Activated naive CD4-positive, alpha-beta T cell treated with anti-CD3 and anti-CD28 coated beads for 36 hours (primary cell): ENCODE measurements at regions of chr1 and their contacts with region 1.

Region 1: GRCh38 chr1:66350001-66350547 is 183.9 kb upstream of the SGIP1 start:
- DNase-seq: peak; percentile 80
- H3K4me3 Mint-ChIP-seq: peak overlapping the region; percentile 33
- H3K27ac Mint-ChIP-seq: peak overlapping the region; percentile 90
- H3K4me1 Mint-ChIP-seq: peaks cover 92% of the 10 kb centered on the region
- H3K27me3 Mint-ChIP-seq: no peaks in the 10 kb centered on the region

Region 2: DNA sequence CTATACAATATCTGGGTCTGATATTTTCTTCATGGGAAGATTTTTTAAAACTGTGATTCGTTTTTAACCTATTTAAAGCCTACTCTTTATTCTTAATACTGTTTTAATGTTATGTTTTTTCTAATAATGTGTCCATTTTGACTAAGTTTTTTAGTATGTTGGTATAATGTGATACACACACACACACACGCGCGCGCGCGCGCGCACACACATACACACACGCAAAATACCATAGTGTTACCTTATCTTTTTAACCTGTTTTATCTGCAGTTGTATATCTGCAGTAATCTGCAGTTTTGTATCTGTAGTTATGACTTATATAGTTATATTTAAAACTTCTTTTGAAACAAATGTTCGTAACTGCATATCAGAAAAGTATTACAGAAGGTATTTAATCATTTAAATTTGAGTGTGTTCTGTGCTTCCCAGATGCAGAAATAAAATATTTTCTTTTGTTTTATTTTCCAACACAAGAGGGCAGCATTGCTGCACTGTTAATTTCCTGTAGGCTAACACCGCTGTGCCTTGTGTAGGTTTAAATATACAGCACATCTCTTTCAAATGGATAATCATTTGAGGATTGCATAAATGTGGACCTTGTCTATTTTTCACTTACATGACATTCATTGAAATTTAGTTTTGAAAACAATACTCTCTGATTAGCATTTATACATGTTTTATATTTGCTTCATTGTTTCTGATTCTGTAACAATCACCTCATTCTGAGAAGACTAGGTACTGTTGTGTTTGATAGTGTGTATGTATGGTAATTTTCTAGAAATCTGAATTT is 391.3 kb before region 1 on chr1:
- CTCF ChIA-PET with region 1: interaction called, 4 read pairs
- intact Hi-C with region 1: loop called (anchors 5 kb)
- DNase-seq: peak; percentile 27
- H3K4me3 Mint-ChIP-seq: no peak overlapping the region
- H3K27ac Mint-ChIP-seq: no peak overlapping the region
- H3K4me1 Mint-ChIP-seq: no peaks in the 10 kb centered on the region
- H3K27me3 Mint-ChIP-seq: no peaks in the 10 kb centered on the region

Region 3: GRCh38 chr1:66258404-66259105 is 91.5 kb before region 1 on chr1:
- CTCF ChIA-PET with region 1: interaction called, 13 read pairs
- intact Hi-C with region 1: loop called (anchors 1 kb)
- DNase-seq: peak; percentile 43
- H3K4me3 Mint-ChIP-seq: no peak overlapping the region
- H3K27ac Mint-ChIP-seq: peak overlapping the region; percentile 3
- H3K4me1 Mint-ChIP-seq: peaks cover 84% of the 10 kb centered on the region
- H3K27me3 Mint-ChIP-seq: no peaks in the 10 kb centered on the region

Region 4: GRCh38 chr1:66339944-66340343 is 10.1 kb before region 1 on chr1:
- CTCF ChIA-PET with region 1: interaction called, 50 read pairs
- intact Hi-C with region 1: loop called (anchors 1 kb)
- DNase-seq: no peak
- H3K4me3 Mint-ChIP-seq: peak overlapping the region; percentile 65
- H3K27ac Mint-ChIP-seq: peak overlapping the region; percentile 82
- H3K4me1 Mint-ChIP-seq: peaks cover 67% of the 10 kb centered on the region
- H3K27me3 Mint-ChIP-seq: no peaks in the 10 kb centered on the region

Region 5: DNA sequence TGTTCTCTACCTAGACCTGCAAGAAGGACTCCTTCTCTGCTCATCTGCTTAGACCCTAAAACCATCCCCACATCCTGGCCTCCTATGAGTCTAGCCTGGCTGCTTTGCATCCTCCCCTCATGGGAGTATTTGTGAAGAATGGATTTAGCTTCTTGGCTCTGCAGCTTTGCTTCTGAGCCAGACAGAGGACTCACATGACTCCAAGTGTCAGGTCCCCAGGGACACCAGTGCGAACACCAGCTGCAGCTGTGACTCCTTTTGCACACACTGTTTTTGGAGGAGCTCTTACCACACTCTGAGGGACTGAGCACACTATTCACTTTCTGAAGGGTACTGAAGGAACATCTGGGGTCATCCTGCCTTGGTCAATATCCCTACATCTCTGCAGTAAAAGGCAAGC is 52.1 kb after region 1 on chr1:
- CTCF ChIA-PET with region 1: interaction called, 3 read pairs
- intact Hi-C with region 1: loop called (anchors 1 kb)
- DNase-seq: no peak
- H3K4me3 Mint-ChIP-seq: no peak overlapping the region
- H3K27ac Mint-ChIP-seq: no peak overlapping the region
- H3K4me1 Mint-ChIP-seq: peaks cover 32% of the 10 kb centered on the region
- H3K27me3 Mint-ChIP-seq: no peaks in the 10 kb centered on the region

Region 6: GRCh38 chr1:66725885-66726665 is 376.0 kb after region 1 on chr1:
- CTCF ChIA-PET with region 1: no interaction called
- intact Hi-C with region 1: loop called (anchors 5 kb)
- DNase-seq: peak; percentile 78
- H3K4me3 Mint-ChIP-seq: no peak overlapping the region
- H3K27ac Mint-ChIP-seq: no peak overlapping the region
- H3K4me1 Mint-ChIP-seq: peaks cover 14% of the 10 kb centered on the region
- H3K27me3 Mint-ChIP-seq: peaks cover 4% of the 10 kb centered on the region